ENCODE measurements at regions of chr12 and their contacts with region 1.

Region 1: DNA sequence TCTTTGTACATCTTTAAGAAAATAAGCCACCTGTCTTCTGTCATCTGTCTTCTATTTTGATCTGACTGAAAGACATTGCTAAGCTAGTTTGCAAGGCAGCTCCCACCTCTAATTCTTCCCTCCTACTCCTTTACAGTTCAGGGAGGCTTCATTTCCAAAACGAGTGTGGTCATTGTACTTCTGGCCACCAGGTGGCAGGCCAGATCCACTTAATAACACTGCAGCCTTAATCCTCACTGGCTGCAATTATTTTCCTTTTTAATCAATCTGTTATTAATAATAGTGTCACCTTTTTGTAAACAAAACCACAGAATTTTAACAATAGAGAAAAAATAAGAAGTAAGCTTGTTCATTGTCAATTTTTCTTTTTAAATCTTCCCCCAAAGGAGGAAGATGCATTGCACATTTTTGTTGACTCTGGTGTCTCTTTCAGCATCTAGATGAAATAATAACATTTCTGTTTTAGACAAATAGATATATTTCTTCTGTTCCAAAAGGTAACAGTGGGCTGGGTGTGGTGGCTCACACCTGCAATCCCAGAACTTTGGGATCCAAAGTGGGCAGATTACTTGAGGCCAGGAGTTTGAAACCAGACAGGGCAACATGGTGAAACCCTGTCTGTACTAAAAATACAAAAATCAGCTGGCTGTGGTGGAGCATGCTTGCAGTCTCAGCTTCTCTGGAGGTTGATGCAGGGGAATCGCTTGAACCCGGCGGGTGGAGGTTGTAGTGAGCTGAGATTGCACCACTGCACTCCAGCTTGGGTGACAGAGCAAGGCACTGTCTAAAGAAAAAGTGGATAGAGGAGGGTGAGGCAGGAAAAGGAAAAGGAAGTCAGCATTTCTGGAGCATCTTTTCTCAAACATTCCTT is 23.3 kb downstream of the GABARAPL1 start:
- DNase-seq: no peak
- H3K4me3 ChIP-seq: no peak overlapping the region
- CTCF ChIP-seq: peak; percentile 77

Region 2: DNA sequence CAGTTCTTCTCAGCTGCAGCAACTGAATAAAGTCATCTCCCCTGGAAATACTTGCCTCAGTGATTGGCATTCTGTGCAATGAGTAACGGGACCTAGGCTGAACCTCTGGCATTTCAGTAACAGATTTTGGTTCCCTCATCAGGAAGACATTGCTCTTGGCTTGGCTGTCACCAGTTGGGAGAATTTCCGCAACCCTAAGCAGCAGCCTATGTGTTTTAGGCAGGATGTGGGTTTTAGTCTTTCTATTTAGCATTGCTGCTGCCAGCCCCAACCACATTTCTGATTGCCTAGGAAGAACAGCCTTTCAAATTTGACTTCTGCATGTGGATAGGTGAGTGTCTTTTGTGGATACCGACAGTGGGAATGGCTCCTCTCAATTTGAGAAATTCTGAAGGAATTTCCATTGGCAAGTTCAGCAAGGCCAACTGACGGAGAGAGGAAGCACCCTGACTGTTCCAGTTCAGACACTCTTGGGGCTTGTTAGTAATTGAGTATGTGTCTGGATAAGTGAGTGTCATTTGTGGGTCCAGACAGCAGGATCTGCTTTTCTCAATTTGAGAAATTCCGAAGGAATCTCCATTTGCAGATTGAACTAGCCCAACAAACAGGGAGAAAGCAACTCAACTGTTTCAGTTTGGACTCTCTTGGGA is 284.8 kb before region 1 on chr12:
- CTCF ChIA-PET with region 1: no interaction called
- POLR2A ChIA-PET with region 1: no interaction called
- DNase-seq: no peak
- H3K4me3 ChIP-seq: no peak overlapping the region
- CTCF ChIP-seq: no peak

Region 3: DNA sequence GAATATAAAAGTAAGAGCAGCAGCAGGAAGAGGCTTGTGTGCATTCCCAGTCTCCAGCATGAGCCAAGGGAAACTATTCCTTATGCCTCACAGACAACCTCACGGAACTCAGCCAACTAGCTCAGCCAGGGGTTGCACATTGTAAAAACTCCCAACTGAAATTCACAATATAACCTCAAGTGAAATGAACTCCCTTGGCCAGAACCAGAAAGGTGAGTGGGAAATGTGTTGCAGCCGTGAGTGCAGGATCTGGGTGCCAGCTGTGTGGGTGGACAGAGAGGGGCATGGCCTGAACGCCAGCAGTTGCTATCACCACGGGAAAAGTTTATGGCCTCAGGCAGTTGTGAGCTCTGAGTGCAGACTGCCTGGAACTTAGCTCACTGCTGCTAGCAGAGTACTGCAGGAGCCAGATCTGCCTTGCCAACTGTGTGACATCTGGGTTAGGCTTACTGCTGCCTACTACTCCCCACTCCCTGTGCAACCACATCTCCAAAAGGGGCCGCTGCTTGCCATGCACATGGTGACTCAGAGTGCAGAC is 134.9 kb before region 1 on chr12:
- CTCF ChIA-PET with region 1: no interaction called
- POLR2A ChIA-PET with region 1: no interaction called
- DNase-seq: peak; percentile 16
- H3K4me3 ChIP-seq: peak overlapping the region; percentile 10; the same call in 1 of the 2 replicates
- CTCF ChIP-seq: no peak

Region 4: GRCh38 chr12:10212201-10213131 is 23.5 kb before region 1 on chr12 and contains the start of gene GABARAPL1:
- CTCF ChIA-PET with region 1: interaction called, 13 read pairs
- POLR2A ChIA-PET with region 1: no interaction called
- DNase-seq: peak; percentile 98
- H3K4me3 ChIP-seq: peak within 1 kb of the TSS; percentile 92
- CTCF ChIP-seq: no peak

Region 5: GRCh38 chr12:10220398-10221077 is 15.5 kb before region 1 on chr12:
- CTCF ChIA-PET with region 1: interaction called, 12 read pairs
- POLR2A ChIA-PET with region 1: no interaction called
- DNase-seq: no peak
- H3K4me3 ChIP-seq: no peak overlapping the region
- CTCF ChIP-seq: no peak

Region 6: DNA sequence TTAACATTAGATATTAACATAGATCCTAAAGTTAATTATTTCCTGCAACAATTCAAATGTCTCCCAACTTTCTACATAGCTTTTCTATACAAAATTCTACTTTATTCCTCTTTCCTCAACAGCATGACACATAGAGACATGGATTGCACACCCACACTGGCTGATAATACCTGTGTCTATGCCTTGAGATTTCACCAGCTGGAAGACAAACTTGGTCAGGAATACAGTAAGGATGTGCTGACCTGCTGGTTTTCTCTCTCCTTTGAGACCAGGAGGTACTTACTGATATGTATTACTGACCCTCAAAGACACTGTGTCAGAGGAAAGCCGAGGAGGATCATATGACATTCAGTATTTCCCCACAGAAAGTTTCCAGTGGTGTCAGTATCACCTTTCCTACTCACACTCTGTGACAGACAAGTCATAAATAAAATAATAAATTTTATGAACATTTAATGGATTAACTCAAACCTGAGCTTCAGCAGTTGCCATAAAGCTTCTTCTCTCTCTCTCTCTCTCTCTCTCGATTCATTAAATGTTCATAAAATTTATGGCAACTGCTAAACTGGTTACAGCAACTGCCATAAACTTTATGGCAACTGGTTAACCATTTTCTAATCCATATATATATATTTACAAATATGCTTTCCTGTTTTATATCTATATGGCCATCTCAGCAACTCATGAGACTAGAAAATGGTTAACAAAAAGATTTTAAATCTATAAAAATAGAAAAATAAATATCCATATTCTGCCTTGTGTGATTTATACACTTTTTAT is 292.4 kb after region 1 on chr12:
- CTCF ChIA-PET with region 1: no interaction called
- POLR2A ChIA-PET with region 1: no interaction called
- DNase-seq: no peak
- H3K4me3 ChIP-seq: no peak overlapping the region
- CTCF ChIP-seq: no peak

Measured in AG04449 (cell line).